Dorsolateral prefrontal cortex (tissue), 120 donors: ENCODE measurements at regions of chr3 and their contacts with region 1.

Region 1: GRCh38 chr3:33645060-33645647 is 72.9 kb downstream of the CLASP2 start:
- DNase-seq: peak in 2 of 10 donors; percentile 47 to 63
- H3K4me3 ChIP-seq: peak overlapping the region; percentile 30 to 75 (median 58)
- H3K27ac ChIP-seq: peak overlapping the region; percentile 3 to 99 (median 74)
- H3K27me3 ChIP-seq: no peaks in the 10 kb centered on the region
- CTCF ChIP-seq: peak in 1 of 56 donors; percentile 8

Region 2: GRCh38 chr3:33658991-33659848 is 14.1 kb after region 1 on chr3:
- intact Hi-C with region 1: loop called in 1 of 2 experiments (anchors 2 kb)
- DNase-seq: peak; percentile 85 to 97 (median 94)
- H3K4me3 ChIP-seq: peak overlapping the region; percentile 37 to 90 (median 77)
- H3K27ac ChIP-seq: peak overlapping the region; percentile 67 to 100 (median 98)
- H3K27me3 ChIP-seq: no peaks in the 10 kb centered on the region
- CTCF ChIP-seq: peak in 33 of 56 donors; percentile 6 to 34 (median 19)

Region 3: DNA sequence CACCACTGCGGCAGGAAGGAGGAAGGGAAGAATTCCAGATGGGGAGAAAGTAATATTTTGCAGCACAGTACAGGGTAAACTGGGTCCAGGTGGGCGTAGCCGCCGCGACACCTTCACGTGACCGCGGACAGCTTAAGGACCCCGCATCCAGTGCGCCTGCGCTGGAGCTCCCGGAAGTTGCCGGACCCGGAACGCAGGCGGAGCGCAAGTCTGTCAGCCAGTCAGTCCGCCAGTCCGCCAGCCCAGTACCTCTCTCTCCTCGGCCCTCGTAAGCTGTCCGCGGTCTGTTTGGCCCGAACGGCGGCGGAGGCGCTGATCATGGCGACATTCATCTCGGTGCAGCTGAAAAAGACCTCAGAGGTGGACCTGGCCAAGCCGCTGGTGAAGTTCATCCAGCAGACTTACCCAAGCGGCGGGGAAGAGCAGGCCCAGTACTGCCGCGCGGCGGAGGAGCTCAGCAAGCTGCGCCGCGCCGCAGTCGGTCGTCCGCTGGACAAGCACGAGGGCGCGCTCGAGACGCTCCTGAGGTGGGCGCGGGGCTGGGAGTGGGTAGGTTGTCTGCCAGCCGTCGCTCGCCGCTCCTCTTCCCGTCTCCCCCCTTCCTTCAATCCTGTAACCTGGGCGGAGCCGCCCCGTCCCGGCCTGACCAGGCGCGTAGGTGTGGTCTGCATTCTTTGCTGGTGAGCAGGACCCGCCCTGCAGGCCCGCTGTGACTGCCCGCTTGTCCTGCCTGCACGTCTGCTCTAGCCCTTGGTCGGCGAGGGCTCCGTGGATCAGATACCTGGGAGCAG is 153.5 kb after region 1 on chr3 and contains the start of gene PDCD6IP:
- intact Hi-C with region 1: no loop called
- DNase-seq: peak; percentile 86 to 94 (median 90)
- H3K4me3 ChIP-seq: peak within 1 kb of the TSS; percentile 64 to 99 (median 92)
- H3K27ac ChIP-seq: peak within 1 kb of the TSS; percentile 13 to 95 (median 85)
- H3K27me3 ChIP-seq: no peaks in the 10 kb centered on the region
- CTCF ChIP-seq: peak in 47 of 56 donors; percentile 3 to 62 (median 39)
- total RNA-seq, gene PDCD6IP: 129 to 240 (median 172) TPM